PC-3 (cell line): ENCODE measurements at regions of chr1 and their contacts with region 1.

Region 1: GRCh38 chr1:209627732-209628196 is 24.5 kb downstream of the LAMB3 start:
- DNase-seq: peak; percentile 88
- ATAC-seq: peak; percentile 72
- H3K4me3 ChIP-seq: no peak overlapping the region
- H3K27ac ChIP-seq: no peak overlapping the region
- H3K4me1 ChIP-seq: no peaks in the 10 kb centered on the region
- H3K27me3 ChIP-seq: no peaks in the 10 kb centered on the region
- CTCF ChIP-seq: peak; percentile 98

Region 2: GRCh38 chr1:209527993-209528392 is 99.8 kb before region 1 on chr1:
- CTCF ChIA-PET with region 1: no interaction called
- POLR2A ChIA-PET with region 1: no interaction called
- intact Hi-C with region 1: no loop called
- DNase-seq: peak; percentile 78
- ATAC-seq: peak; percentile 63
- H3K4me3 ChIP-seq: no peak overlapping the region
- H3K27ac ChIP-seq: peak overlapping the region; percentile 72
- H3K4me1 ChIP-seq: peaks cover 32% of the 10 kb centered on the region
- H3K27me3 ChIP-seq: no peaks in the 10 kb centered on the region
- CTCF ChIP-seq: no peak

Region 3: GRCh38 chr1:209576798-209577197 is 51.0 kb before region 1 on chr1:
- CTCF ChIA-PET with region 1: interaction called, 3 read pairs
- POLR2A ChIA-PET with region 1: no interaction called
- intact Hi-C with region 1: loop called (anchors 1 kb)
- DNase-seq: peak; percentile 98
- ATAC-seq: peak; percentile 99
- H3K4me3 ChIP-seq: no peak overlapping the region
- H3K27ac ChIP-seq: no peak overlapping the region
- H3K4me1 ChIP-seq: peaks cover 12% of the 10 kb centered on the region
- H3K27me3 ChIP-seq: no peaks in the 10 kb centered on the region
- CTCF ChIP-seq: peak; percentile 99